ENCODE measurements at regions of chr1 and their contacts with region 1.

Region 1: DNA sequence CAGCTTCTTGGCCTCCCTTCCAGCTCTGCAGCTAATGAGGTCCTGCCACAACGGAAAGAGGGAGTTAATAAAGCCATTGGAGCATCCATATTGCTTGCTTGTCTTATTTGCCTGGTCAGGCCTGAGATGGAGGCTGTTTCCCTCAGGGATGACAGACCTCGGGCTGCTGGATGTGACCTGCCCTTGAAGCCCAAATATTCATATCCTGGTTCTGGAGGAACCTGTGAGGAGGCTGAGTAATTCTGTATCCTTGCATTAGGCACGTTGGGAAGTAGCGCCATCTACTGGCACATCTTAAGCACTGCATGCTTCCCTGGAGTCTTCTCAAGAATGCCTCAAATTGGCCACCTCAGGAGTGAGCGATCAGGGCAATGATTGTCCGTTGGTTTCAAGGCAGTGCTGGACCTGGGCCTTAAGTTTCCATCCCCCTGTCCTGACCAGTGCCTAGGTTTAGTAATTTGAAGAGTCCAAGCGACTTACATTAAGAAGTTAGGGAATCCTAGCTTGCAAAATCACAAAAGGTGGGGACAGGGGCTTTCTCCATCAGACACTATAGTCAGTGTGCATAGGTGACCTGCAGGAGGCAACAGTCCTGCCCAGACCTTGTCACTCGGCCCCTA is 13.8 kb upstream of the NASP start:
- DNase-seq: peak; percentile 81
- ATAC-seq: peak; percentile 95
- H3K4me3 Mint-ChIP-seq: no peak overlapping the region
- H3K27ac Mint-ChIP-seq: peak overlapping the region; percentile 5
- H3K4me1 Mint-ChIP-seq: peaks cover 2% of the 10 kb centered on the region
- H3K27me3 Mint-ChIP-seq: no peaks in the 10 kb centered on the region

Region 2: GRCh38 chr1:45499415-45499769 is 70.7 kb before region 1 on chr1:
- CTCF ChIA-PET with region 1: interaction called, 11 read pairs
- DNase-seq: peak; percentile 51
- ATAC-seq: peak; percentile 3
- H3K4me3 Mint-ChIP-seq: peak overlapping the region; percentile 95
- H3K27ac Mint-ChIP-seq: peak overlapping the region; percentile 93
- H3K4me1 Mint-ChIP-seq: peaks cover 39% of the 10 kb centered on the region
- H3K27me3 Mint-ChIP-seq: no peaks in the 10 kb centered on the region

Region 3: GRCh38 chr1:45521398-45522323 is 48.4 kb before region 1 on chr1 and contains the start of gene PRDX1:
- CTCF ChIA-PET with region 1: interaction called, 29 read pairs
- DNase-seq: peak; percentile 97
- ATAC-seq: peak; percentile 85
- H3K4me3 Mint-ChIP-seq: peak within 1 kb of the TSS; percentile 93
- H3K27ac Mint-ChIP-seq: peak within 1 kb of the TSS; percentile 89
- H3K4me1 Mint-ChIP-seq: peaks cover 44% of the 10 kb centered on the region
- H3K27me3 Mint-ChIP-seq: peaks cover 9% of the 10 kb centered on the region
- total RNA-seq, gene PRDX1: 225 to 412 TPM

Region 4: DNA sequence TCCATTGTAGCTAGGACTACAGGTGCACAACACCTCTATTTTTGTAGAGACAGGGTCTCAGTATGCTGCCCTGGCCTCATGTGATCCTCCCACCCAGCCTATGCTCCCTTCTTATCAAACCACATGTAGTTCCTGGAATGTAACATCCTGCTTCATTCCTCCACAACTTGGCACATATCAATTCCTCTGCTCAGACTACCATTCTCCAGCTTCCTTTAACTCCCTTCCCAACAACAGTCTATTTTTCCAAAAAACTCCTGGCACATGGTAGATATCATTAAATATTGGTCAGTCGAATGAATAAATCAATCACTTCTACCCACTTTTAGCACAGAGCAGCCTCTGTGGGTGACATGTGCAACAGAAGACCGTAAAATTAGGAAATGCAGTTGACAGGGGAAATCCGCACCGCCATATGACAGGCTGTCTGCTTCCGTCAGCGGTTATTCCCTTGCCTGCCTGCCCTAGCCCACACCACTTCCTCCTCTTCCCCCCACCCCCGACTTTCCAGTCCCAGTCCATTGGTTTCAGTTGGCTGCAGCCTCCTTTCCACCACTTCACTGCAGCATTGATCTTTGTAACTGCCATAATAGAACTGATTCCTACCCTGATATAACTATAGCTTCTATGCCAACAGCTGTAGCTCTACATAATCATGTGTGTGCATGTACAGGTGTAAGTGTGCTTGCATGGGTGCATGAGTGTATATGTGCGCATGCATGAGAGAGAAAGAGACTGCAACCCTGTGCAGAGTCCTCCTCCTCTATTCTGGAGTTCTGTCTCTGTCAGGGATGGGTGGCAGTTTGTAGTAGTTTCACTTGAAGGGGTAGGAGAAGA is 26.3 kb before region 1 on chr1:
- CTCF ChIA-PET with region 1: interaction called, 27 read pairs
- DNase-seq: peak; percentile 83
- ATAC-seq: peak; percentile 86
- H3K4me3 Mint-ChIP-seq: peak overlapping the region; percentile 11
- H3K27ac Mint-ChIP-seq: peak overlapping the region; percentile 3
- H3K4me1 Mint-ChIP-seq: peaks cover 29% of the 10 kb centered on the region
- H3K27me3 Mint-ChIP-seq: peaks cover 37% of the 10 kb centered on the region

Region 5: DNA sequence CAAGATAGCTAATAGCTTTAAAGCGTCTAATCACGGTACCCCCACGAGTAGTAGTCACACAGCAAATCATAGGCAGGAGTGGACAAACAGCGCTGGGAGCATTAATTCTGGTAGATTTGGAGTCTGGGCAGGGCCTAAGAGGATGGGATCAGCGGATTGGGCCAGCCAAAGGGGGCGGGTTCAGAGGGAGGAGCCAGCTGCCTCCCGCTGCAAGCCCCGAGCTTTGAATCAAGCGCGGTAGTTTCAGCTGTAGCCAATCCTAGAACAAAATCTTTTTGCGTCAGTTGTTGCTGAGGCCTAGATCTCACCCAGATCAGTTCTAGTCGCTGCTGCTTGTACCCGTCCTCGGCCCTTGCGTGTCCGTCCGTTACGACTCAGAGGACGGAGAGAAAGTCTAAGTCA is 13.2 kb after region 1 on chr1:
- CTCF ChIA-PET with region 1: interaction called, 48 read pairs
- DNase-seq: peak; percentile 97
- ATAC-seq: peak; percentile 76
- H3K4me3 Mint-ChIP-seq: peak overlapping the region; percentile 87
- H3K27ac Mint-ChIP-seq: peak overlapping the region; percentile 100
- H3K4me1 Mint-ChIP-seq: peaks cover 26% of the 10 kb centered on the region
- H3K27me3 Mint-ChIP-seq: no peaks in the 10 kb centered on the region

Region 6: GRCh38 chr1:45643978-45644377 is 73.9 kb after region 1 on chr1:
- CTCF ChIA-PET with region 1: no interaction called
- DNase-seq: no peak
- ATAC-seq: no peak
- H3K4me3 Mint-ChIP-seq: no peak overlapping the region
- H3K27ac Mint-ChIP-seq: no peak overlapping the region
- H3K4me1 Mint-ChIP-seq: peaks cover 2% of the 10 kb centered on the region
- H3K27me3 Mint-ChIP-seq: no peaks in the 10 kb centered on the region